Dendritic cell treated with granulocyte-macrophage colony-stimulating factor and Interleukin-4, amounts not matched to agents 40 ng/mL and 50 ng/mL, for 4 days (primary cell): ENCODE measurements at regions of chr2 and their contacts with region 1.

Region 1: DNA sequence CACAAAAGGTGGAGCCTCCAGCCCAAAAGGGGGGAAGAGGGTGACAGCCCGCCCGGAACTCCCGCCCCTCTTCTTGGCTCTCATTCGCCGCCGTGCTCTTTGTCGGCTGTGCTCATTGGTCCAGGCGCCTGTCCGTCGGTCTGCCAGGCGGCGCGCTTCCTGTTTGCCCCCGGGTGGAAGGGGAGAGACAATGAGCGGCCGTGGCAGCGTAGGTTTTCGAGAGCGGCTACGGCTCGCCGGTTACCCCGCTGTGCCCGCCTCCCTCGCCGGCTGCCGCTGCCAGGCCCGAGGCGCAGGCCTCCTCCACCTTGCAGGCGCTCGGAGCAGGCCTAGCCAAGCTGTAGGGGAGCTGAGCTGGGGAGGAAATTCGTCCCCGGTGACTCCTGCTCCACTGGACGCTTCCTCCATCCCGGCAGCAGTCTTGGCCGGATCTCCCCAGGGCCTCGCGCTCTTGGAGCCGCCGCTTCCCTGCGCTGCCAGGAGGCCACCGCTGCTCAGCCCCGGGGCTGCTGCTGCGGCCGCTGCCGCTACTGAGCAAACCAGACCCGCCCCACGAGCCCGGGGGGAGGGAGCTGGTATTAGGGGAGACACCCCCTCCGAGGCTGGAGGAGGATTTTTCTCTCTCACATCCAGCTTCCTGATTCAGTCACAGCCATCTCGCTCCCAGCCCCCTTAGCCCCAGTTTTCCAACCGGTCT is at the start of gene SP3:
- H3K4me3 Mint-ChIP-seq: peak within 1 kb of the TSS; percentile 96
- H3K27ac Mint-ChIP-seq: peak within 1 kb of the TSS; percentile 100
- H3K4me1 Mint-ChIP-seq: peaks cover 44% of the 10 kb centered on the region
- H3K27me3 Mint-ChIP-seq: no peaks in the 10 kb centered on the region

Region 2: GRCh38 chr2:173997269-173997668 is 31.8 kb after region 1 on chr2:
- intact Hi-C with region 1: loop called (anchors 5 kb)
- H3K4me3 Mint-ChIP-seq: no peak overlapping the region
- H3K27ac Mint-ChIP-seq: peak overlapping the region; percentile 98
- H3K4me1 Mint-ChIP-seq: peaks cover 50% of the 10 kb centered on the region
- H3K27me3 Mint-ChIP-seq: no peaks in the 10 kb centered on the region